ENCODE measurements at regions of chr2 and their contacts with region 1.

Region 1: GRCh38 chr2:38076606-38077430 is 867 bp upstream of the CYP1B1 start:
- DNase-seq: peak; percentile 81
- H3K4me3 ChIP-seq: peak overlapping the region; percentile 55
- H3K27ac ChIP-seq: peak overlapping the region; percentile 68
- H3K4me1 ChIP-seq: peaks cover 6% of the 10 kb centered on the region
- H3K27me3 ChIP-seq: no peaks in the 10 kb centered on the region
- CTCF ChIP-seq: peak; percentile 63

Region 2: DNA sequence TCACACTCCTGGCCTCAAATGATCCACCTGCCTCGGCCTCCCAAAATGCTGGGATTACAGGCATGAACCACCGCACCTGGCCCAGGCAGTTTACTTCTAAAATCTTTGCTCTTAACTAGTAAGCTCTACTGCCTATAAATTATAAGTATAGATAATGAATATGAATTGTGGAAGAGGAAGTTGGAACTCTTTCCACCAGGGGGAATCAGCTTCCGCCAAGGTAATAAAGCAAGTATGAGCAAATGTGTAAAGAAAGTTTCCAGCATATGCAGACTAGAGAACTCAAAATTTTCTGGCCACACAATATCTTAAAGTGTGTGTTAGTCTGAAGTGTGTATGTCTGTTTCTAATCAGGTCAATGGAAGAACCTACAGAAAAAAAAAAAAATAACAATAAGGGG is 83.7 kb before region 1 on chr2:
- CTCF ChIA-PET with region 1: no interaction called
- POLR2A ChIA-PET with region 1: interaction called, 10 read pairs
- intact Hi-C with region 1: no loop called
- DNase-seq: peak; percentile 9
- H3K4me3 ChIP-seq: no peak overlapping the region
- H3K27ac ChIP-seq: no peak overlapping the region
- H3K4me1 ChIP-seq: no peaks in the 10 kb centered on the region
- H3K27me3 ChIP-seq: no peaks in the 10 kb centered on the region
- CTCF ChIP-seq: no peak

Region 3: GRCh38 chr2:38106405-38107094 is 29.7 kb after region 1 on chr2:
- CTCF ChIA-PET with region 1: interaction called, 11 read pairs
- POLR2A ChIA-PET with region 1: no interaction called
- intact Hi-C with region 1: no loop called
- DNase-seq: peak; percentile 76
- H3K4me3 ChIP-seq: no peak overlapping the region
- H3K27ac ChIP-seq: peak overlapping the region; percentile 65
- H3K4me1 ChIP-seq: peaks cover 21% of the 10 kb centered on the region
- H3K27me3 ChIP-seq: no peaks in the 10 kb centered on the region
- CTCF ChIP-seq: no peak

Measured in A673 (cell line).